ENCODE measurements at regions of chr22 and their contacts with region 1.

Region 1: GRCh38 chr22:45058622-45058912 is 48.8 kb upstream of the PHF21B start:
- DNase-seq: no peak
- ATAC-seq: no peak
- H3K4me3 ChIP-seq: no peak overlapping the region
- H3K27ac ChIP-seq: no peak overlapping the region
- H3K4me1 ChIP-seq: no peaks in the 10 kb centered on the region
- H3K27me3 ChIP-seq: peaks cover 0 to 10% (median 0%) of the 10 kb centered on the region in 9 donors
- CTCF ChIP-seq: no peak
- POLR2A ChIP-seq: no peak

Region 2: DNA sequence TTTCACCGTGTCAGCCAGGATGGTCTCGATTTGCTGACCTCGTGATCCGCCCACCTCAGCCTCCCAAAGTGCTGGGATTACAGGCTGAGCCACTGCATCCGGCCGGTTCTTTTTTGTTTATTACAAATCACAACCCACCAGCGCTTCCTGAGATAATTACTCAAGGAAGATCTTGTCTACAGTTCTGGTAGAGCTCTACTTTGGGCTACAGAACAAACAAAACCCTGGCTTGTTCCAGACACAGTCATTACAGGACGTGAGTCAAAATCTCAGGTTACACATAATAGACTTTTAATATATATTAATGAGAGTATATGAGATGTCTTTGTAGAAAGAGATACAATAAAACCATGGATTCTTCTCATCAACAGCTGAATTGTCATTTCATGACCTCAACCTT is 62.4 kb after region 1 on chr22:
- intact Hi-C with region 1: no loop called
- DNase-seq: no peak
- ATAC-seq: no peak
- H3K4me3 ChIP-seq: no peak overlapping the region
- H3K27ac ChIP-seq: no peak overlapping the region
- H3K4me1 ChIP-seq: no peaks in the 10 kb centered on the region
- H3K27me3 ChIP-seq: peaks cover 0 to 33% (median 3%) of the 10 kb centered on the region in 9 donors
- CTCF ChIP-seq: no peak
- POLR2A ChIP-seq: no peak

Region 3: GRCh38 chr22:45389521-45389920 is 331.0 kb after region 1 on chr22:
- intact Hi-C with region 1: loop called in 1 of 10 experiments (anchors 10 kb)
- DNase-seq: no peak
- ATAC-seq: no peak
- H3K4me3 ChIP-seq: no peak overlapping the region
- H3K27ac ChIP-seq: no peak overlapping the region
- H3K4me1 ChIP-seq: no peaks in the 10 kb centered on the region
- H3K27me3 ChIP-seq: peaks cover 0 to 10% (median 0%) of the 10 kb centered on the region in 9 donors
- CTCF ChIP-seq: no peak
- POLR2A ChIP-seq: no peak